Colonic mucosa (tissue), 4 donors: ENCODE measurements at regions of chr9 and their contacts with region 1.

Region 1: GRCh38 chr9:6584881-6585597 is 60.5 kb downstream of the GLDC start:
- DNase-seq: no peak
- H3K4me3 ChIP-seq: no peak overlapping the region
- H3K27ac ChIP-seq: no peak overlapping the region
- H3K4me1 ChIP-seq: no peaks in the 10 kb centered on the region
- H3K27me3 ChIP-seq: no peaks in the 10 kb centered on the region
- CTCF ChIP-seq: peak; percentile 35

Region 2: DNA sequence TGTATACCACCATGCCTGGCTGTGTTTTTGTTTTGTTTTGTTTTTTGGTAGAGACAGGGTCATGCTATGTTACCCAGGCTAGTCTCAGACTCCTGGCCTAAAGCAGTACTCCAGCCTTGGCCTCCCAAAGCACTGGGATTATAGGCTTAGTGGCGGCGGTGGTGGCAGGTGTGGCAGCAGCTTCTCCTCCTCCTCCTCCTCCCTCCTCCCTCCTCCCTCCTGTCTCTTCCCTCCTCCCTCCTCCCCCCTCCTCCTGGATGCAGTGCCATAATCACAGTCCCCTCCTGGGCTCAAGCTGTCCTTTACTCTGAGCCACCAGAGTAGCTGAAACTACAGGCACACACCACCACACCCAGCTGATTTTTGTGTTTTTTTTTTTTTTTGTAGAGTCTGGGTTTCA is 100.8 kb before region 1 on chr9:
- intact Hi-C with region 1: no loop called
- DNase-seq: no peak
- H3K4me3 ChIP-seq: no peak overlapping the region
- H3K27ac ChIP-seq: no peak overlapping the region
- H3K4me1 ChIP-seq: no peaks in the 10 kb centered on the region
- H3K27me3 ChIP-seq: no peaks in the 10 kb centered on the region
- CTCF ChIP-seq: no peak

Region 3: DNA sequence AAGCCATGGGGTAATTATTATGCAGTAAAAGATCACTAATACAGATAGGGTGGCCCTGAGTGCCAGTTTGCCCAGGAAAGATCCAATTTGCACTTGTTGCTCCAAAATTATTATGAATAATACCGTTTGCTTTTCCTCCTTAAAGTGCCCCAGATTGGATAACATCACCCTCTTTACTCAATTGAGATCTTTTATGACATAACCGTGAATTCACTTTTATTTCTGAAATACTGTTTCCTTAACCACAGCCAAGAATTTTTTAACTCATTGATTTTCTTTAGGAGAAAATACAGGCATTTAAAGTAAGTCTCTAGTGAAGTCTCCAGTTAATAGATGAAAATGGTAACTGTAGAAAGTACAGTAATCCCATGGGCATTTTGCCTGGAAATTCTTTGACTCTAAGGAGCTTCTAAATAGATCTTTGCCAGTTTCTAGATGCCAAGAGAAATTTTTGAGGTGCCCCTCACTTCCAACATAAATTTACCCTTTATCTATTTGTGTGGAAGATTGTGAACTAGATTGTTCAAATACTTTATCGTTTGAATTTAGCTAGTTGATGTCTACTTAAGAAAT is 72.9 kb before region 1 on chr9:
- intact Hi-C with region 1: no loop called
- DNase-seq: no peak
- H3K4me3 ChIP-seq: no peak overlapping the region
- H3K27ac ChIP-seq: no peak overlapping the region
- H3K4me1 ChIP-seq: no peaks in the 10 kb centered on the region
- H3K27me3 ChIP-seq: no peaks in the 10 kb centered on the region
- CTCF ChIP-seq: no peak

Region 4: DNA sequence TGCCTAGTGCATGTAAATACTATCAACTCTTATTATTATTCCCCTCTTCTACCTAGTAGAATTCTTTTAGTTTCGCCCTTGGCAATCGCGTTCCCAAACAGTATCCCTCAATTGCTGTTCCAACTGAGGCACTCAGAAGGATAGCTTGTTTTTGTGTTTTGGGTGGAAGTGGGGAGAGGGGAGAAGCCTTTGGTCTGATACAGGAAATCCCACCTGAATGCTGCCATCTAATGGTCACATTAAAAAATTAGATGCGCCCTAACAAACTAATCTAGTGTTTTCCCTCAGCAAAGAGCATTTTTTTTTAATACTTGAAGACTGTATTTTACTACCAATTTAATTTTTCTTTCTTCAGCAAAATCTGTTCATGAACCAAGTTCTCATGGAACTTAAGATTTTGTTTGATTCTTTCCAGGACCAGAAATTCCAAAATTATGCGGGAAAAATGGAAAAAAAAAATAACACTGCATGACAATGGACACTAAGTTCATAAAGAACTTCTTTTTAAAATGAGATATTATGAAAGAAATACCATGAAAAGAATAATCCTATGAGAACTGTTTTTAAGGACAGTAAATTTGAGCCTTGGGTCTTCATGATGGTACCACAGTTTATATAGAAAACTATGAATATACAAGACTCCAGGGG is 82.7 kb after region 1 on chr9:
- intact Hi-C with region 1: loop called (anchors 5 kb)
- DNase-seq: no peak
- H3K4me3 ChIP-seq: no peak overlapping the region
- H3K27ac ChIP-seq: no peak overlapping the region
- H3K4me1 ChIP-seq: no peaks in the 10 kb centered on the region
- H3K27me3 ChIP-seq: no peaks in the 10 kb centered on the region
- CTCF ChIP-seq: peak; percentile 47

Region 5: GRCh38 chr9:6739218-6739617 is 154.2 kb after region 1 on chr9:
- intact Hi-C with region 1: loop called (anchors 5 kb)
- DNase-seq: no peak
- H3K4me3 ChIP-seq: no peak overlapping the region
- H3K27ac ChIP-seq: no peak overlapping the region
- H3K4me1 ChIP-seq: no peaks in the 10 kb centered on the region
- H3K27me3 ChIP-seq: no peaks in the 10 kb centered on the region
- CTCF ChIP-seq: no peak